GM12878 (cell line): ENCODE measurements at regions of chr9 and their contacts with region 1.

Region 1: GRCh38 chr9:94002316-94003140 is 47.4 kb upstream of the BARX1 start:
- DNase-seq: no peak
- ATAC-seq: peak; percentile 53
- H3K4me3 ChIP-seq: no peak overlapping the region
- H3K27ac ChIP-seq: no peak overlapping the region
- H3K4me1 ChIP-seq: no peaks in the 10 kb centered on the region
- H3K27me3 ChIP-seq: no peaks in the 10 kb centered on the region
- CTCF ChIP-seq: peak; percentile 48 to 68 (median 56); a peak in 5 of 6 replicates
- EP300 ChIP-seq: no peak
- POLR2A ChIP-seq: no peak
- RAD21 ChIP-seq: peak; percentile 43

Region 2: DNA sequence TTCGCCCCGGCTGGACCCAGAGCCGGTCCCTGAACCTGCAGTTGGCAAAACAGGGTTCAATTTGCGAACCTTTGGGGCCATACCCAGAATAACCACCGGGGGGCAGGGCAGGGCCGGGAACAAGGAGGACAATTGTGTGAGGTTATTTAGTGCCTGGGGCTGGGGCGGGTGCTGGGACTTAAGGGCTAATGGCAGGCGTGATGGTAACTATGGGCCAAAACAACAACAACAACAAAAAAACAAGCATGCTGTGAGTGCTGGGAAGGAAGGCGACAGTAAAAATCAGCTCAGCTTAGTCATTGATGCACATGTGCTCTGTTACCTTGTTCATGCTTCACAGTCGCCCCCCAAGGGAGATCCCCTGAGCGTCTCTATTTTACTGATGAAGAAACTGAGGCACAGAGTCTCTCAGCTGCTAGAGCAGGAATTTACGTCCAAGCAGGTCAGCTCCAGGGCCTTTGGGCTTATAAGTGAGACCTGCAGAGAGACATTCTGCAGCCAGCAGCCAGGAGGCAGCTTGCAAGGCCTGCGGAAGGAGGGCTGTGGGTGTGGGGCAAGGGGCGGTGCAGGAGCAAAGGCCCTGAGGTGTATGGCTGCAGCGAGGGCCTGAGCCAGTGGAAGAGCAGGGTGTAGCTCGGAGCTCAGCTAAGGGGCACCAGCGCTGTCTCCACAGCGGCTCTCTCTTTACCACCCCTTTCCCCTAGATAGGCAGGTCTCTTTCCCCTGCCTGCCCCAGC is 320.1 kb before region 1 on chr9:
- CTCF ChIA-PET with region 1: interaction called, 12 read pairs
- POLR2A ChIA-PET with region 1: no interaction called
- RAD21 ChIA-PET with region 1: no interaction called
- SMC1A ChIA-PET with region 1: no interaction called
- in situ Hi-C with region 1: no loop called
- intact Hi-C with region 1: no loop called
- DNase-seq: no peak
- ATAC-seq: peak; percentile 91
- H3K4me3 ChIP-seq: no peak overlapping the region
- H3K27ac ChIP-seq: no peak overlapping the region
- H3K4me1 ChIP-seq: no peaks in the 10 kb centered on the region
- H3K27me3 ChIP-seq: no peaks in the 10 kb centered on the region
- CTCF ChIP-seq: peak; percentile 75 to 80 (median 79)
- EP300 ChIP-seq: no peak
- POLR2A ChIP-seq: no peak
- RAD21 ChIP-seq: peak; percentile 88

Region 3: GRCh38 chr9:93713716-93714115 is 288.8 kb before region 1 on chr9:
- CTCF ChIA-PET with region 1: no interaction called
- POLR2A ChIA-PET with region 1: no interaction called
- RAD21 ChIA-PET with region 1: no interaction called
- SMC1A ChIA-PET with region 1: no interaction called
- in situ Hi-C with region 1: no loop called
- intact Hi-C with region 1: no loop called
- DNase-seq: no peak
- ATAC-seq: no peak
- H3K4me3 ChIP-seq: no peak overlapping the region
- H3K27ac ChIP-seq: no peak overlapping the region
- H3K4me1 ChIP-seq: no peaks in the 10 kb centered on the region
- H3K27me3 ChIP-seq: no peaks in the 10 kb centered on the region
- CTCF ChIP-seq: no peak
- EP300 ChIP-seq: no peak
- POLR2A ChIP-seq: no peak
- RAD21 ChIP-seq: no peak

Region 4: GRCh38 chr9:93891549-93892310 is 110.8 kb before region 1 on chr9:
- CTCF ChIA-PET with region 1: no interaction called
- POLR2A ChIA-PET with region 1: no interaction called
- RAD21 ChIA-PET with region 1: no interaction called
- SMC1A ChIA-PET with region 1: no interaction called
- in situ Hi-C with region 1: no loop called
- intact Hi-C with region 1: no loop called
- DNase-seq: no peak
- ATAC-seq: no peak
- H3K4me3 ChIP-seq: no peak overlapping the region
- H3K27ac ChIP-seq: no peak overlapping the region
- H3K4me1 ChIP-seq: no peaks in the 10 kb centered on the region
- H3K27me3 ChIP-seq: no peaks in the 10 kb centered on the region
- CTCF ChIP-seq: no peak
- EP300 ChIP-seq: no peak
- POLR2A ChIP-seq: no peak
- RAD21 ChIP-seq: no peak

Region 5: GRCh38 chr9:93978551-93978950 is 24.0 kb before region 1 on chr9:
- CTCF ChIA-PET with region 1: no interaction called
- POLR2A ChIA-PET with region 1: no interaction called
- RAD21 ChIA-PET with region 1: no interaction called
- SMC1A ChIA-PET with region 1: no interaction called
- in situ Hi-C with region 1: no loop called
- intact Hi-C with region 1: no loop called
- DNase-seq: no peak
- ATAC-seq: no peak
- H3K4me3 ChIP-seq: no peak overlapping the region
- H3K27ac ChIP-seq: no peak overlapping the region
- H3K4me1 ChIP-seq: no peaks in the 10 kb centered on the region
- H3K27me3 ChIP-seq: no peaks in the 10 kb centered on the region
- CTCF ChIP-seq: no peak
- EP300 ChIP-seq: no peak
- POLR2A ChIP-seq: no peak
- RAD21 ChIP-seq: no peak

Region 6: DNA sequence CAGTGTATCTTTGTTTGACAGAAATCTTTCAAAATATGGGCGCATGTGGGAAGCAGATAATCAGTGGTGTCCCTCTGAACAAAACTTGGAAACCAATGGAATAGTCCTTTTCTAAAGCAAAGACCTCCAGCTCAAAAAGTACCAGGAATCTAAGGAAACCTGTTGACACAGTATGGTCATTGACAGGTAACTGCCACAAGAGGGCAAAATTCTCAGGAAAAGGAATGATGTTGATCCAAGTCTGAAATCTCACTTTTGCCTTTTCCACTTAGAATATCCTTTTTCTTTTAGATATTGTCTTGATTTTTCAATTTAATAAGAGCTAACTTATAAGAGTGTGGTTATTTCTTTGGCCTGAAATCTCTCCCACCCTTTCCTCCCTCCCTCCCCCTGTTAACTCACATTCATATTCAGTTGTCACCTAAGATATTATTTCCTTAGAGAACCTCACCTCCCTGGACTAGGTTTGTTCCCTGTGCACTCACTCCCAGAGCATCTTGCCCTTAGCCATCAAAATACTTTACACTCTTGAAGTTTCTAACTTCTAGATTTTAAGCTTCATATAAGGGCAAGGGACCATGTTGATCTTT is 11.6 kb after region 1 on chr9:
- CTCF ChIA-PET with region 1: interaction called, 28 read pairs
- POLR2A ChIA-PET with region 1: no interaction called
- RAD21 ChIA-PET with region 1: interaction called, 3 read pairs
- SMC1A ChIA-PET with region 1: interaction called, 5 read pairs
- in situ Hi-C with region 1: no loop called
- intact Hi-C with region 1: no loop called
- DNase-seq: no peak
- ATAC-seq: peak; percentile 53; the same call in 2 of the 3 replicates
- H3K4me3 ChIP-seq: no peak overlapping the region
- H3K27ac ChIP-seq: no peak overlapping the region
- H3K4me1 ChIP-seq: no peaks in the 10 kb centered on the region
- H3K27me3 ChIP-seq: no peaks in the 10 kb centered on the region
- CTCF ChIP-seq: peak; percentile 42 to 55 (median 51)
- EP300 ChIP-seq: no peak
- POLR2A ChIP-seq: no peak
- RAD21 ChIP-seq: peak; percentile 45

Region 7: DNA sequence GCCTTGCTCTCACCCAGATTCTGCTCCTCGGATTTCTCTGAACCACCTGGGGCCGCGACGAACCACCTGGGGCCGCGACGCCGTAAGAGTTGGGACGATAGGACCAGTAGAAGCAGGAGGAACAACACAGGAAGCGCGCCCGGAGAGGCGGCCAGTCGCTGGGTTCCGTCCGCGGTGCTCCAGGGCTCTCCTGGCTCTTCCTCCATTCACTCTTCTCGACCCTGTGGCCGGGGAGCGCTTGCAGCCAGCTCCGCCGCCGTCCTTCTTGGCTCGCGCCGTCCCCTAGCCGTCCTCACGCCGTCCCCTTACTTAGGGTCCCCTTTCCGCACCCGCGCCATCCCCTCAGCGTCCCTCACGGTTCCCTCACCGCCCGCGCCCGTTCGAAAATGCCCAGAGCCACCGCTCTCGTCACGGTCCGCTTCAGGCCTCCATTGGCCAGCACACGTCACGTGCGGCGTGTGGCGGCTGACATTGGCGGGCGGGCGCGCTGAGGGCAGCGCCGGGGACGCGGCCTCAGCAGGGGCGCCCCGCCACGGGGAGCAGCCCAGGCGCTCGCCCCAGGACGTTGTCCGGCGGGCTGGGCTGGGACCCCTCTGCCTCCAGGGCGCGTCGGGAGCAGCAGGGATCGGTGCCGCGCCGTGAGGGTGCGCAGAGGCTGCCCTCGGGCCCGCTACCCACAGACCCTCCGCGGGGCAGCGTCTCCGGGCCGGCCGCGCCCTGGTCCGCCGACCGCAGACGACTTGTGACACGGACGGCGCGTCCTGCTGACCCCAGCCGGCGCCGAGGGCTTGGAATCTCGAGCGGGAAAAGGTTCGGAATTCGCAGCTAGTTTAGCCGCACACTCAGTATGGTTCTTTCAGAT is 28.0 kb after region 1 on chr9:
- CTCF ChIA-PET with region 1: no interaction called
- POLR2A ChIA-PET with region 1: no interaction called
- RAD21 ChIA-PET with region 1: no interaction called
- SMC1A ChIA-PET with region 1: no interaction called
- in situ Hi-C with region 1: no loop called
- intact Hi-C with region 1: no loop called
- DNase-seq: peak; percentile 26
- ATAC-seq: peak; percentile 100
- H3K4me3 ChIP-seq: peak overlapping the region; percentile 91
- H3K27ac ChIP-seq: peak overlapping the region; percentile 51
- H3K4me1 ChIP-seq: no peaks in the 10 kb centered on the region
- H3K27me3 ChIP-seq: no peaks in the 10 kb centered on the region
- CTCF ChIP-seq: no peak
- EP300 ChIP-seq: no peak
- POLR2A ChIP-seq: peak; percentile 95
- RAD21 ChIP-seq: no peak